ENCODE measurements at regions of chr4 and their contacts with region 1.

Region 1: DNA sequence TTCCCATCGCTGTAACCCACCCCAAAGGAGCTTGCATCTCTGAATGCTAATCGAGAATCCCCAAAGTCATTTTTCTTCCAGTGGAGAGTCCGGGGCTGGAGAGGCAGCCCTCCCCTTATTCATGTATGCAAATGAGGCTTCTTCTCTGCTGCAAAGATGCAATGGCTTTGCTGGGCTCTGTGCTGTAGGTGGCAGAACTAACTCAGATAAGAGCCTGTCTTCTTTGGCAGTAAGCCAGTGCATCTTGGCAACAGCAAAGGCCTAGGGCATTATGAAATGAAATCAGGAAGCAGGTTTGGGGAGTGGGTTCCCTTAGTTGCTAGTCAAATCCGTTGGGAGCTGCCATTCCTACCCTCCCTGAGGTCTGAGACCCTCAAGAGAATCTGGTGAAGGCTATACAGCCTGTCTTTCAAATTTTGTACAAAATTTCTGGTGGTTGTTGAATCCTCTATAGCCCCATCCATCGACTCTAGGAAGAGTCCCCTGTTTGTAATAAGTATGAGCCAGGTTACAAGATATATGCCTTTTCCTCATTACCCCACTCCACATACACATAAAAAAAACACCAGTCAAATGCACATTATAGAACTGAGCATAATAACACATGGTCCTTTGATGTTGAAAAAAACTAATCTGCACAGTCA is 290.6 kb upstream of the TAPT1 start:
- DNase-seq: peak; percentile 85
- ATAC-seq: peak; percentile 85
- H3K4me3 ChIP-seq: no peak overlapping the region
- H3K27ac ChIP-seq: no peak overlapping the region
- H3K4me1 ChIP-seq: no peaks in the 10 kb centered on the region
- H3K27me3 ChIP-seq: no peaks in the 10 kb centered on the region
- CTCF ChIP-seq: peak; percentile 75
- POLR2A ChIP-seq: no peak
- RAD21 ChIP-seq: peak; percentile 79

Region 2: GRCh38 chr4:16205298-16206164 is 311.4 kb before region 1 on chr4:
- CTCF ChIA-PET with region 1: no interaction called
- POLR2A ChIA-PET with region 1: no interaction called
- dilution Hi-C with region 1: no loop called
- in situ Hi-C with region 1: no loop called
- intact Hi-C with region 1: no loop called
- DNase-seq: no peak
- ATAC-seq: no peak
- H3K4me3 ChIP-seq: no peak overlapping the region
- H3K27ac ChIP-seq: no peak overlapping the region
- H3K4me1 ChIP-seq: no peaks in the 10 kb centered on the region
- H3K27me3 ChIP-seq: no peaks in the 10 kb centered on the region
- CTCF ChIP-seq: peak; percentile 49
- POLR2A ChIP-seq: no peak
- RAD21 ChIP-seq: peak; percentile 29; the same call in 1 of the 2 replicates

Region 3: DNA sequence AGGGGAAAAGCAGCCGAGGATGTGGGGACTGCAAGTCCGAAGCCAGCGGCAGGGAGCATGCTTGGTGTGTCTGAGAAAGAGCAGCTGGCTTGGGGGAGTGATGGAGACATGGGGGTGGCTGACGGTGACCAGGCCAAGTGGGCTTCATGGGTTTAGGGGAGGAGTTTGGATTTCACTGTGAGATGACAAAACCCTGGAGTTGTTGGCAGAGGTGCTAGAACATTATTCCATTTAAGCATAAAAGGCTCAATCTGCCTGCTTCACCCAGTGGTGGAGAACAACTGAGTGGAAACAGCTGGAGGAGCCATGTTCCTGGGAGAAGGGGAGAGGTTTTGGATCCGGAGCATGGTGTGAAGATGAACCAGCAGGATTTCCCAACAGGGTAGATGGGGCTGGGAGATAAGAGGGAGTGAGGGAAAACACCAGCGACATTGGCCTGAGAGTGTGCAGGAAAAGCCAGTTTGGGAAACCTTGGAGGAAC is 27.4 kb after region 1 on chr4:
- CTCF ChIA-PET with region 1: no interaction called
- POLR2A ChIA-PET with region 1: no interaction called
- dilution Hi-C with region 1: no loop called
- in situ Hi-C with region 1: no loop called
- intact Hi-C with region 1: no loop called
- DNase-seq: no peak
- ATAC-seq: peak; percentile 61; the same call in 1 of the 2 replicates
- H3K4me3 ChIP-seq: no peak overlapping the region
- H3K27ac ChIP-seq: no peak overlapping the region
- H3K4me1 ChIP-seq: no peaks in the 10 kb centered on the region
- H3K27me3 ChIP-seq: no peaks in the 10 kb centered on the region
- CTCF ChIP-seq: no peak
- POLR2A ChIP-seq: no peak
- RAD21 ChIP-seq: no peak

Region 4: DNA sequence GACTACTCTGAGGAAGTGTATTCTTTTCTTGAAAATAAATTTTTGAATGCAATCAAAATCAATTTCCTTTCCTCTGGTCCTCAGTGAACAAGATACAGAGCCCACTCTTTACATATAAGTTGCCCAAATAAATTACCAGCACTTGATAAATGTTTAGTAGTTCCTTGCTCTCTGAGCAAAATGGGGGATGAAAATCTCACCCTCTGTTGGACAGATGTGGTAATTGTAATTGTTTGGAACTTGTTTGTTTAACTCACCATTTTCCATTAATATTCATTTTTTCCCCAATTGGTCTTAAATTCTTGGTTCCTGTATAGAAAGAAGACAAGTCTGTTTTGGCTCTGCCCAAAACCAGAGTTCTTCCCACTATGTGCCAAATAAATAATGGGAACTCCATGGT is 235.2 kb after region 1 on chr4:
- CTCF ChIA-PET with region 1: no interaction called
- POLR2A ChIA-PET with region 1: no interaction called
- dilution Hi-C with region 1: no loop called
- in situ Hi-C with region 1: no loop called
- intact Hi-C with region 1: loop called (anchors 10 kb)
- DNase-seq: peak; percentile 25
- ATAC-seq: no peak
- H3K4me3 ChIP-seq: no peak overlapping the region
- H3K27ac ChIP-seq: no peak overlapping the region
- H3K4me1 ChIP-seq: no peaks in the 10 kb centered on the region
- H3K27me3 ChIP-seq: no peaks in the 10 kb centered on the region
- CTCF ChIP-seq: peak; percentile 39
- POLR2A ChIP-seq: no peak
- RAD21 ChIP-seq: peak; percentile 55

Region 5: DNA sequence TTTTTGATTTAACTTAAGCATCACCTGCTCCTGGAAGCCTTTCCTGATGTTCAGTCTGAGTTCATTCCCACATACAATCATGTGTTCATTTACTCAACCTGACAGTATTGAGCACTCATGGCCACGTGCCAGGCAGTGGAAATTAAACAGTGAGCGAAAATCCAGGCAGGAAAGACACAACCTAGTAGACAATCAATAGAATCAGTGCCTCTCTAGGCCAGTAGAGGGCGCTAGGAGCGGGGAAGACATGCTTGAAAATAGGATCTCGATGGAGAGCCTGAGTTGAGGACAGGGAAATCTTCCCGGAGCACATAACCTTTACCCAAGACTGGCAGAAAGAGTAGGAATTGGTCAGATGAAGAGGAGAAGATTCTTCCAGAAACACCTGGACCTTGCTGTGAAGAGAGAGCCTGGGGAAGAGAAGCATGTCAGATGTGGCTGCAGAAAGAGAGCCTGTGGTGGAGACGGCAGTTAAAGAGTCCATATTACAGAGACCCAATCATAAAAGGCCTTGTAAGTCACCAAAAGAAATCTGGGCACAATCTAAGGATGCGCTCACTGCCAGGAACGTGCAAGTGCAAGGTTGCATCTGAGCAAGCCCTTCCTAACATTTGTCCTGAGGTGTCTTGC is 278.0 kb after region 1 on chr4:
- CTCF ChIA-PET with region 1: no interaction called
- POLR2A ChIA-PET with region 1: no interaction called
- dilution Hi-C with region 1: no loop called
- in situ Hi-C with region 1: no loop called
- intact Hi-C with region 1: loop called (anchors 2 kb)
- DNase-seq: peak; percentile 60
- ATAC-seq: peak; percentile 80
- H3K4me3 ChIP-seq: no peak overlapping the region
- H3K27ac ChIP-seq: no peak overlapping the region
- H3K4me1 ChIP-seq: no peaks in the 10 kb centered on the region
- H3K27me3 ChIP-seq: no peaks in the 10 kb centered on the region
- CTCF ChIP-seq: peak; percentile 84
- POLR2A ChIP-seq: no peak
- RAD21 ChIP-seq: peak; percentile 91

Region 6: DNA sequence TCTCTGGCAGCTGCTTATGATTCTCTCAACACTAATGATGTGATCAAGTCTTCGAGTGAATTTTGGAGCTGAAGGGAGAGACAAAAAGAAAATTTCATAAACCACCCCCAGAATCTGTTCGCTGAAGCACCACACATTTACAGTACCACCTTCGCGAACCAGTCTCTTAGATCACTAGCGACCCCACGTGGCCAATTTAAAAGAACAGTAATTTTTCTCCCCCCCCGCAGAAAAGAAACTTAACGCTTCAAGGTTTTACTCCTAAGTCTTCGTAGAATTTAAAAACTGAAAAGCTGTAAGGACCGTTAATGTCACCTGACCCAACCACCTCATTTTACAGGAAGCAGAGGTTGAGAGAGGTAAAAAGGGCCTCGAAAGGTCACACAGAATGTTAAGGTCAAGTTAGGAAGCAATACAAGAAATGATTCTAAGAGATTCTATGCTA is 807.5 kb after region 1 on chr4:
- CTCF ChIA-PET with region 1: interaction called, 3 read pairs
- POLR2A ChIA-PET with region 1: no interaction called
- dilution Hi-C with region 1: no loop called
- in situ Hi-C with region 1: no loop called
- intact Hi-C with region 1: loop called (anchors 1 kb)
- DNase-seq: peak; percentile 77
- ATAC-seq: peak; percentile 86
- H3K4me3 ChIP-seq: no peak overlapping the region; the same call in 1 of the 2 replicates
- H3K27ac ChIP-seq: peak overlapping the region; percentile 73; the same call in 1 of the 2 replicates
- H3K4me1 ChIP-seq: peaks cover 4% of the 10 kb centered on the region; the same call in 1 of the 2 replicates
- H3K27me3 ChIP-seq: no peaks in the 10 kb centered on the region
- CTCF ChIP-seq: peak; percentile 89
- POLR2A ChIP-seq: peak; percentile 42; the same call in 1 of the 2 replicates
- RAD21 ChIP-seq: peak; percentile 94

Region 7: DNA sequence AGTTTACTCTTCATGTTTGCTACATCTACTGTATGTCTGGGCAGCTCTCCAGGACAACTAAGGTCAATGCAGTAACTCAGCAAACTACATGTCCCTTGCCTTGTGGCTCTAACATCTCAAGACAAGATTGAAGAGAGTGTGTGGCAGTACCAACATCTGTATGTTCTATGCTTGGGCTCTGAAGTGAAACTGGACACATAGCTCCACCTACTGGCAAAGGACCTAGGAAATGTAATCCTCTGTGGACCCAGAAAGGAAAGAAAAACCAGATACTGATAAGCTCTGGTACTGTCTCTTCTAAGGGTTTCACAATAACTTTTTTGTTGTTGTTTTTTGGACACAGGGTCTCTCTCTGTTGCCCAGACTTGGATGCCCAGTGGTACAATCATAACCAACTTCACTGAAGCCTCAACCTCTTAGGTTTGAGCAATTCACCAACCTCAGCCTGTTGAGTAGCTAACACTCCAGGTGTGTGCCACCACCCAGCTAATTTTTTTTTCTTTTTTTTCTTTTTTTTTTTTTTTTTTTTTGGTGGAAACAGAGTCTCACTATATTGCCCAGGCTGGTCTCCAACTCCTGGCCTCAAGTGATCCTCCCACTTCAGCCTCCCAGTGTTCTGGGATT is 930.9 kb after region 1 on chr4:
- CTCF ChIA-PET with region 1: interaction called, 3 read pairs
- POLR2A ChIA-PET with region 1: no interaction called
- dilution Hi-C with region 1: no loop called
- in situ Hi-C with region 1: no loop called
- intact Hi-C with region 1: loop called (anchors 5 kb)
- DNase-seq: peak; percentile 81
- ATAC-seq: peak; percentile 93
- H3K4me3 ChIP-seq: no peak overlapping the region
- H3K27ac ChIP-seq: no peak overlapping the region
- H3K4me1 ChIP-seq: 0 out of 2 replicates have a peak, but pooled peaks cover 3% of the 10 kb centered on the region
- H3K27me3 ChIP-seq: peaks cover 2% of the 10 kb centered on the region; the same call in 1 of the 2 replicates
- CTCF ChIP-seq: peak; percentile 83
- POLR2A ChIP-seq: no peak
- RAD21 ChIP-seq: peak; percentile 86